Ascending aorta (tissue), 2 donors: ENCODE measurements at regions of chr21 and their contacts with region 1.

Region 1: GRCh38 chr21:32278518-32279376 is at the start of gene MIS18A:
- DNase-seq: peak; percentile 80 to 98
- H3K4me3 ChIP-seq: peak within 1 kb of the TSS; percentile 69 to 77
- H3K27ac ChIP-seq: peak within 1 kb of the TSS; percentile 44 to 65
- H3K4me1 ChIP-seq: peaks cover 9 to 13% of the 10 kb centered on the region in 2 donors
- H3K27me3 ChIP-seq: no peaks in the 10 kb centered on the region
- CTCF ChIP-seq: peak in 1 of 3 experiments; percentile 6
- total RNA-seq, gene MIS18A: 0.64 TPM

Region 2: DNA sequence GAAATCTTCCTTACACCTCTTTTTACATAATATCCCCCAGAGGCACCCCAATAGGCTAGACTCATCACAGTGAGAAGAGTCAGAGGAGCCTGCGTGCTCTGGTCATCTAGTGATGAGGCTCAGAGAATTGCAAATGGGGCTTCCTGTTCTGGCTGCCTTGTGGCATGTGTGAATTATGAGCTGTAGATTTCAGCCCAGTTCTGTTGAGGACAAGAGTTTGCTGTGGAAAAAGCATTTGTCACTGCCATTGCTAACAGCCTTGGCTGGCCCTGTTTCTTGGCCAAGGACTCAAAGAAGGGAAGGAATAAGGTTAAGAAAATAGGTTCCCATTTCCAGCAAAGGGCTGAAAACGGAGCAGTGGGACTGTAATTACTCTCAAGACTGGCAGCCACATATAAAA is 50.6 kb after region 1 on chr21:
- intact Hi-C with region 1: loop called (anchors 2 kb)
- DNase-seq: peak in 1 of 2 donors; percentile 86
- H3K4me3 ChIP-seq: no peak overlapping the region
- H3K27ac ChIP-seq: peak overlapping the region; percentile 81 to 89
- H3K4me1 ChIP-seq: peaks cover 15 to 20% of the 10 kb centered on the region in 2 donors
- H3K27me3 ChIP-seq: no peaks in the 10 kb centered on the region
- CTCF ChIP-seq: no peak

Region 3: DNA sequence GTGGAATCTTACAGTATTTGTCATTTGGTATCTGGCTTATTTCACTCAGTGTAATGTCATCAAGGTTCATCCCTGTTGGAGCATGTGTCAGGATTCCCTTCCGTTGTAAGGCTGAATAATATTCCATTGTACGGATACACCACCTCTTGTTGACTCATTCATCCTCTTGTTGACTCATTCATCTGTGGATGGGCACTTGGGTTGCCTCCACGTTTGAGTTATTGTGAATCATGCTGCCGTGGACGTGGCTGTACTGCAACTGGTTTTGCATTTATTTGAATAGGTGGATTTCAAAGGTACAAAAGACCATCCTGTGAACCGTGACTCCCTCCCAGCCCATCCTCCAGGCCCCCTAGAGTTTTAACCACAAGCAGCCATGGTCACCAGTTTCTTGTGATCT is 318.5 kb after region 1 on chr21:
- intact Hi-C with region 1: loop called (anchors 2 kb)
- DNase-seq: no peak
- H3K4me3 ChIP-seq: no peak overlapping the region
- H3K27ac ChIP-seq: no peak overlapping the region
- H3K4me1 ChIP-seq: no peaks in the 10 kb centered on the region
- H3K27me3 ChIP-seq: no peaks in the 10 kb centered on the region
- CTCF ChIP-seq: no peak